Common myeloid progenitor, CD34-positive (primary cell): ENCODE measurements at regions of chr1 and their contacts with region 1.

Region 1: GRCh38 chr1:117758444-117759316 is 152.8 kb downstream of the TENT5C start:
- DNase-seq: peak; percentile 82 to 88 (median 87)
- H3K4me3 ChIP-seq: peak overlapping the region; percentile 30 to 76 (median 50)
- H3K27ac ChIP-seq: no peak overlapping the region
- H3K4me1 ChIP-seq: peaks cover 0 to 12% (median 9%) of the 10 kb centered on the region in 4 experiments
- H3K27me3 ChIP-seq: peaks cover 0 to 10% (median 0%) of the 10 kb centered on the region in 5 experiments

Region 2: DNA sequence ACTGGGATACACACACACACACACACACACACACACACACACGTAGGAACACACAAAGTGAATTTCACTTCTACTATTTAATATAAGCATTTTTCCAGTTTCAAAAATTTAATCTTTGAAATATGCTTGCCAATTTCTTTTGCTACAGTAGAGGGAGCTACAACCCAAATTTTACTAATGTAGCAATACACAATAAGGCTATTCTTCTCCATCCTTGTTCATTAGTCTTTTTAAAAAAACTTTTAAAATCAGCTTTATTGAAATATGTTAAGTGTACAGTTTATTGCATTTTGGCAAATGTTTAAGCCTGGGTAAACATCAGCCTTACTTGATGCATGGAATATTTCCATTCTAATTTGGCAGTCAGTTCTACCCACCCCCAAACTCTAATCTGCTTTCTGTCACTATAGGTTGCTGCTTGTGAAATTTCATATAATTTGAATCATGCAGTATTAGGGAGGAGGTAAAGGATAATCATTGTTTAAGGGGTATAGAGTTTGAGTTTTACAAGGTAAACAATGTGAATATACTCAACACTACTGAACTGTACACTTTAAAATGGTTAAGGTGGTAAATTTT is 245.8 kb before region 1 on chr1:
- CTCF ChIA-PET with region 1: interaction called, 75 read pairs
- POLR2A ChIA-PET with region 1: no interaction called
- DNase-seq: peak; percentile 17 to 56 (median 46)
- H3K4me3 ChIP-seq: no peak overlapping the region
- H3K27ac ChIP-seq: no peak overlapping the region
- H3K4me1 ChIP-seq: no peaks in the 10 kb centered on the region
- H3K27me3 ChIP-seq: no peaks in the 10 kb centered on the region

Region 3: DNA sequence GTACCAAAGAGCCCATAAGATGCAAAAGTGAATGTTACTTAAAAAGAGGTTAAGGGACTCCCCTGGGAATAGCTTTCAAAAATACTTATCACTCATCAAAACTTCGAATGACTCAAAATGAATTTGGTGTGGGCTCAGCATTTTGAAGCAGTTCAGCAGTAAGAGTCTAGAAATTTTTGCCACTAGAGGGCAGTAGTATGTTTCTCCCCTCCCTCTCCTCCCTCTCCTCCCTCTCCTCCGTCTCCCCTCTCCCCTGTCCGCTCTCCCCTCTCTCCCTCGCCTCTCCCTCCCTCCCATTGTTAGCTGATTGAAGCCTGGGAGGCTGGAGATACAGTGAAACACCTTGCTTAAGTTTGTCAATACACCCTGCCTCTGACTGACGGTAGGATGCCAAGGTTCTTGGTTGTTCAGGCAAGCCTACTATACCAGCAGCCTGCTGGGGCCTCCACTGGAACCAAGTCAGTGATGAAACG is 223.6 kb before region 1 on chr1:
- CTCF ChIA-PET with region 1: interaction called, 58 read pairs
- POLR2A ChIA-PET with region 1: interaction called, 4 read pairs
- DNase-seq: peak; percentile 65 to 79 (median 77)
- H3K4me3 ChIP-seq: peak overlapping the region in 1 of 7 experiments; percentile 27
- H3K27ac ChIP-seq: no peak overlapping the region
- H3K4me1 ChIP-seq: no peaks in the 10 kb centered on the region
- H3K27me3 ChIP-seq: peaks cover 0 to 3% (median 0%) of the 10 kb centered on the region in 5 experiments

Region 4: DNA sequence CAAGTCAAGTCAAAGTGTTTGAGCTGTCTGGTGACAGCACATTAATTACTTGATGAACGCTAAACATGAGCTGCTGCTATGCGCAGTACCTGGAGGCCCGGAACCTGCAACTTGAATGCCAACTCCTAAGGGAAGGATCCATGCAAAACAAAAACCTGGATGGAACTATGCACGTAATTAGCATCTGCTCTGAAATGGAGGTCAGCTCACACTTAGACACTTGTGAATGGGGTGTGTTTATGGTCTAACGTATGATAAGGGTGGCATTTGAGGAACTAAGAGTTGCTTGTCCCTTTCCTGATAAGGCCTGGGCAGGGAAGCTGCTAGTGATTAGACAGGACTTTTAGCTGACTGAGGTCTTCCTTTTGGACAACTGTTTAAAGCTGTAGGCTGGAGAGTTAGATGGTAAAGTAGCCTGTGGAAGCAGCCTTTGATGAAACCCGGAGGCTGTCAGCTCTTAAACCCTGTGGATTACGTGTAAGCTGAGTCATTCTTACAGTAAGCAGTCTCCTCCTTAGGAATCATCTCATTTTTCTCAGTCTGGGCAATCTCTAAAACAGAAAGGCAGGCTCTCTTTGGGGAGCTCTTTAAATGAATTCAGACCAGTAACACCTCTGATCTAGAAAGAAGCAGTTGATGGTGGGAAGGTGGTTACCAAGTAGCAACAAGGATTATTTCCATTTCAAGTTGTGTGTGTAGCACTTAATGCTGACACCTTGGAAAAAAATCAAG is 146.0 kb before region 1 on chr1:
- CTCF ChIA-PET with region 1: interaction called, 13 read pairs
- POLR2A ChIA-PET with region 1: no interaction called
- DNase-seq: peak; percentile 76 to 90 (median 78)
- H3K4me3 ChIP-seq: peak overlapping the region in 5 of 7 experiments; percentile 11 to 62 (median 42)
- H3K27ac ChIP-seq: peak overlapping the region; percentile 25 to 76
- H3K4me1 ChIP-seq: peaks cover 41 to 90% (median 63%) of the 10 kb centered on the region in 4 experiments
- H3K27me3 ChIP-seq: no peaks in the 10 kb centered on the region

Region 5: GRCh38 chr1:117740496-117740895 is 18.2 kb before region 1 on chr1:
- CTCF ChIA-PET with region 1: interaction called, 10 read pairs
- POLR2A ChIA-PET with region 1: interaction called, 3 read pairs
- DNase-seq: no peak
- H3K4me3 ChIP-seq: no peak overlapping the region
- H3K27ac ChIP-seq: no peak overlapping the region
- H3K4me1 ChIP-seq: peaks cover 0 to under 1% (median 0%) of the 10 kb centered on the region in 4 experiments
- H3K27me3 ChIP-seq: no peaks in the 10 kb centered on the region